IMR-90 (cell line): ENCODE measurements at regions of chr5 and their contacts with region 1.

Region 1: DNA sequence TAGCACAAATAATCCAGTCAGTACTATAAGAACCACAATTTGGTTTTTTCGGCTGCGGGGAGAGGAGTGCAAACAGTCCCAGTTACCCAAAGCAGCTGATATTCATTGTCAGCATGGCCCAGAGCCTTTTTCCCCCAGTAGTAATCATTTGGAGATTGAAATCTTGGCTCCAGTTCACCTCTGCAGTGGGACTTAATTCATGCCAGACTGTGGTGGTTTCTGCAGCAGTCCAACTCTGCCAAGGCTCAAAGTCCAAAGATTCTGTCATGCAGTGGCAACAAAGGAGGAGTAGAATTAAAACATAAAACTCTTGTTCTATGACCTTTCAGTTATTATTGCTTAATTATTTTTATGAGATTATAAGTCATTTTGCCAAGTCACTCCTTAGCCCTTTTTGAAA is 25.0 kb upstream of the TRIM36 start:
- DNase-seq: no peak
- ATAC-seq: no peak
- H3K4me3 ChIP-seq: no peak overlapping the region
- H3K27ac ChIP-seq: no peak overlapping the region
- H3K4me1 ChIP-seq: no peaks in the 10 kb centered on the region
- H3K27me3 ChIP-seq: peaks cover 2% of the 10 kb centered on the region; the same call in 1 of the 2 replicates
- CTCF ChIP-seq: no peak
- POLR2A ChIP-seq: no peak
- RAD21 ChIP-seq: no peak

Region 2: GRCh38 chr5:115169487-115170133 is 25.1 kb before region 1 on chr5 and contains the start of gene TRIM36:
- CTCF ChIA-PET with region 1: no interaction called
- POLR2A ChIA-PET with region 1: no interaction called
- dilution Hi-C with region 1: no loop called
- in situ Hi-C with region 1: no loop called
- intact Hi-C with region 1: no loop called
- DNase-seq: peak; percentile 79
- ATAC-seq: peak; percentile 95
- H3K4me3 ChIP-seq: peak within 1 kb of the TSS; percentile 73
- H3K27ac ChIP-seq: no peak within 1 kb of the TSS
- H3K4me1 ChIP-seq: peaks cover 4% of the 10 kb centered on the region; the same call in 1 of the 2 replicates
- H3K27me3 ChIP-seq: peaks cover 49% of the 10 kb centered on the region
- CTCF ChIP-seq: peak; percentile 26; the same call in 1 of the 2 replicates
- POLR2A ChIP-seq: no peak
- RAD21 ChIP-seq: no peak
- total RNA-seq, gene TRIM36: under 0.01 and 0.18 TPM in 2 replicates

Region 3: DNA sequence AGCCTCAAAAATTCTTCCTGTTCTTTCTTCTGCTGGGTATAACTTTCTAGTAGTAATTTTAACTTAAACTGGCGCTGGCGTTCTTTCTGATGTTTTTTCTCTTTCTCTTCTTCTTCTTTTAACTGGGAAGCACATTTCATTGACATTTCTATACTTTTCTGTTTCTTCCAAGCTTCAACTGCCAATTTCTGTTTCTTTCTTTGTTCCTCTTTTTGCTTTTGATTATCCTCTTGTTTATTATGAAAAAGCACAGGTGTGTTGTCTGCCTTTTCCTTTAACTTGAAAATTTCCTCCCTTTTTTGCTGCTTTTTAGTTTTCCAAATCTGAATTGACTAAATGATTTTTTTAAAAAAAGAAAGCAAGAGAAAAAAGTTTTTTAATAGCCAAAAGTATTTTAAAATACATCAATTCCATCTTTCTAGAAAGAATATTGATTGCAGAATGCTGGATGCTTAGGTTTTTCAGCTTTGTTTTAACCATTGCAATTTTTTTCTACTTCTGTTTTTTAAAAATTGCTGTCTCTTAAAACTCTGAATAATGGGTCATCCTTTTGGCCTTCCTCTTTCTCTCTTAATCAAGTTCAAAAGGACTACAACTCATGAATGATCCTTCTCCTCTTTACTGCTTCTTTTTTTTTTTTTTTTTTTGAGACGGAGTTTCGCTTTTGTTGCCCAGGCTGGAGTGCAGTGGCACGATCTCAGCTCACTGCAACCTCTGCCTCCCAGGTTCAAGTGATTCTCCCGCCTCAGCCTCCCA is 76.8 kb after region 1 on chr5:
- CTCF ChIA-PET with region 1: no interaction called
- POLR2A ChIA-PET with region 1: interaction called, 14 read pairs
- dilution Hi-C with region 1: no loop called
- in situ Hi-C with region 1: no loop called
- intact Hi-C with region 1: no loop called
- DNase-seq: no peak
- ATAC-seq: no peak
- H3K4me3 ChIP-seq: no peak overlapping the region
- H3K27ac ChIP-seq: no peak overlapping the region
- H3K4me1 ChIP-seq: peaks cover 2% of the 10 kb centered on the region; the same call in 1 of the 2 replicates
- H3K27me3 ChIP-seq: no peaks in the 10 kb centered on the region
- CTCF ChIP-seq: no peak
- POLR2A ChIP-seq: no peak
- RAD21 ChIP-seq: no peak